ENCODE measurements at regions of chr11 and their contacts with region 1.

Region 1: GRCh38 chr11:95398437-95399112 is 167.6 kb upstream of the SESN3 start:
- DNase-seq: no peak
- ATAC-seq: no peak
- H3K4me3 Mint-ChIP-seq: no peak overlapping the region
- H3K27ac Mint-ChIP-seq: no peak overlapping the region
- H3K4me1 Mint-ChIP-seq: no peaks in the 10 kb centered on the region
- H3K27me3 Mint-ChIP-seq: no peaks in the 10 kb centered on the region

Region 2: DNA sequence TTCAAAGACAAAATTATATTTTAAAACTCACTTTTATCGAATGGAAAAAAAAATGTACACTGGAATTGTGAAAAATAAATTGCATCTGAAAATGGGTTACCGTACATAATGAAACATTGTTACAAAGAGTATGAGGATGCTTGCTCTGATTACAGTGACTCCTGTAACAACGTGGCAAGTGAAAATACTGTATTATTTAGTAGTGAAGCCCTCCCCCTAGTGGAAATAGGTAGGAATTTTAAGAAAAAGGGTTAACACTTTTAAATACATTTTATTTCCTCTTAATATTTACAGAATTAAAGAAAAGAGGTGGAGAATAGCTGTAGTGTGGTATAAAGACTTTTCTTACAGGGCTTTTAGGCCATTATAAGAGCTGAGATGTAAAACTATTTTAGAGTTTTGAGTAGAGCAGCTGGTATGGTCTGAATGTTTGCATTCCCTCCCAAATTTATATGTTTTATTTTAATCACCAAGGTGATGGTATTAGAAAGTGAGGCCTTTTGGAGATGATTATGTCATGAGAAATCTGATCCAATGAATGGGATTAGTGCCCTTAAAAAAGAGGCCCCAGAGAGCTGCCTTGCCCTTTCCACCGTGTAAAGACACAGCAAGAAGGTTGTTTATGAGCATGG is 365.8 kb after region 1 on chr11:
- CTCF ChIA-PET with region 1: no interaction called
- POLR2A ChIA-PET with region 1: no interaction called
- intact Hi-C with region 1: loop called in 1 of 2 experiments (anchors 10 kb)
- DNase-seq: no peak
- ATAC-seq: peak; percentile 65
- H3K4me3 Mint-ChIP-seq: no peak overlapping the region
- H3K27ac Mint-ChIP-seq: no peak overlapping the region
- H3K4me1 Mint-ChIP-seq: no peaks in the 10 kb centered on the region
- H3K27me3 Mint-ChIP-seq: no peaks in the 10 kb centered on the region

Measured in activated CD4-positive, alpha-beta T cell treated with anti-CD3 and anti-CD28 coated beads for 36 hours (primary cell).